A673 (cell line): ENCODE measurements at regions of chr3 and their contacts with region 1.

Region 1: GRCh38 chr3:56799251-56799882 is 2.4 kb downstream of the ARHGEF3 start:
- DNase-seq: peak; percentile 51
- H3K4me3 ChIP-seq: no peak overlapping the region
- H3K27ac ChIP-seq: no peak overlapping the region
- H3K4me1 ChIP-seq: no peaks in the 10 kb centered on the region
- H3K27me3 ChIP-seq: no peaks in the 10 kb centered on the region
- CTCF ChIP-seq: peak; percentile 53

Region 2: DNA sequence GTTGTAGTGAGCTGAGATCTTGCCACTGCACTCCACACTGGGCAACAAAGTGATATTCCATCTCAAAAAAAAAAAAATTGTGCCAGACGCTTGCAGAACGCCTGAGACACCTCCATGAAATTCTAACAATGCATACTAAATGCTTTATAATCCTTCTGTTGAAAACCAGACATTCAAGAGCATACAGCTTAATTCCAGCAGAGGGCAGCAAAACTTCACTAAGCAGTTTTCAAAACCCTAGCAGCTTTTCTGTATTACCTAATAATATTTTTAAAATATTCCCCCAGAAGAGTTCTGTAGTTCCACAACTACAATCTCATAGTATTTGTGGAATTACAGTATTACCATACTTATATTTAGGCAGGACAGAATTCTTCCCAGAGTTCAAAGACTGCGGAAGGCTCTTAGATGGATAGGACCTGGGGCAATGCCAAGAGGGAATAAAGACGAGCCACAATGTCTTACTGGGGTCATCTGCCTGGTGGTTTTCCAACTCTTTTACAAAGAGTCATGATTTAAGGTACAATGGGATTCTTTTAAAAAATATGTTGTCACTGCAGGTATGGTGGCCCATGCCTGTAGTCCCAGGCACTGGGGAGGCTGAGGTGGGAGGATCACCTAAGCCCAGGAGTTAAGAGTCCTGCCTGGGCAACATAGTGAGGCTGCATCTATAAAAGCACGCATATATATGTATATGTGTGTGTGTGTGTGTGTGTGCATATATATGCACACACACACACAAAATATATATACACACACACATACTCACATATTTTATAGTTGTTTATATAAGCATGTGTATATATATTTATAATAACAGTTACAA is 96.7 kb before region 1 on chr3:
- CTCF ChIA-PET with region 1: interaction called, 5 read pairs
- POLR2A ChIA-PET with region 1: no interaction called
- intact Hi-C with region 1: loop called (anchors 2 kb)
- DNase-seq: peak; percentile 48
- H3K4me3 ChIP-seq: no peak overlapping the region
- H3K27ac ChIP-seq: no peak overlapping the region
- H3K4me1 ChIP-seq: no peaks in the 10 kb centered on the region
- H3K27me3 ChIP-seq: no peaks in the 10 kb centered on the region
- CTCF ChIP-seq: peak; percentile 63